Dorsolateral prefrontal cortex (tissue), 120 donors: ENCODE measurements at regions of chr2 and their contacts with region 1.

Region 1: GRCh38 chr2:112941753-112942658 is 31.0 kb downstream of the IL37 start:
- DNase-seq: peak; percentile 46 to 86 (median 80)
- H3K4me3 ChIP-seq: no peak overlapping the region
- H3K27ac ChIP-seq: no peak overlapping the region
- H3K27me3 ChIP-seq: no peaks in the 10 kb centered on the region
- CTCF ChIP-seq: peak; percentile 32 to 92 (median 83)

Region 2: GRCh38 chr2:112606488-112606902 is 335.5 kb before region 1 on chr2:
- intact Hi-C with region 1: loop called in 1 of 2 experiments (anchors 10 kb)
- DNase-seq: no peak
- H3K4me3 ChIP-seq: no peak overlapping the region
- H3K27ac ChIP-seq: no peak overlapping the region
- H3K27me3 ChIP-seq: no peaks in the 10 kb centered on the region
- CTCF ChIP-seq: no peak

Region 3: DNA sequence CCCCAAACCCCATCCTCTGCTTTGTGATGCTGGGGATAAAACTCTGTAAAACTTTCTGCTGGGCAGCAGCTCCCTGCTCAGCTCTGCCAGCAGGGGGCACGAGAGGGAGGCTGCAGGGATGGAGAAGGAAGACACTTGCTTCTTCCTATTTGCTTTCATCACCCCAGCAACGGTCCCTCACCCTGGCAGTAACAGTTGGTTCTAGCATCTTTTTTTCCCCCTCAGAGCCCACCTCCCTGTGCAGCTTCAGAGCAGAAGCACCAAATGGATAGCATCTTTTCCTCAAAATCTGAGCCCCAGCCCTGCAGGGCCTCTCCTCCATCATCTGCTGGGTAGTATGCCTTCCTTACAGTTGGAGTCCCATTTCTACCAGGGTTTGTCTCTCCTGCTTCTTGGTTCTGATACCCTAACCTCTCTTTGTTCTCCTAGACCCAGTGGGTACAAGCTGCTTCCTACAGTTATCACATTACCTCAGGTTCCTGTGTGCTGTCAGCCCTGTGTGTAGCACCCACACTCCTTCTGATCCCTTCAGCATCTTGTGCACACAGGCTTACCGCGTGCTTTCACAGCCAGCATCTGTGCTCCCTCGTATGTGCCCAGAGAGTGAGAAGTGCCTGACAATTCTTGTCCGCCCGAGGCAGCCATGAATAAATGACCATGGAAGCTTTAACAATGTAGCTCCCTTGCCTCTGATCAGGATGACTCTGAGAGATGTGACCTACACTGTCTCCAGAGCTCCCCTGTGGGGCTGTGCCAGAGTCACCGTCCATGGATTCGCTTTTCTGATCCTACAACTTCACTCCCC is 192.0 kb before region 1 on chr2:
- intact Hi-C with region 1: loop called (anchors 2 to 5 kb)
- DNase-seq: peak; percentile 58 to 84 (median 68)
- H3K4me3 ChIP-seq: peak overlapping the region in 3 of 59 donors; percentile 2 to 21 (median 8)
- H3K27ac ChIP-seq: peak overlapping the region in 31 of 59 donors; percentile 1 to 72 (median 38)
- H3K27me3 ChIP-seq: no peaks in the 10 kb centered on the region
- CTCF ChIP-seq: peak; percentile 73 to 98 (median 93)